CD8-positive, alpha-beta T cell (primary cell): ENCODE measurements at regions of chrX and their contacts with region 1.

Region 1: GRCh38 chrX:107205770-107206696 is at the starts of genes DNAAF6 and NUP62CL:
- DNase-seq: peak; percentile 28 to 82 (median 63)
- ATAC-seq: peak; percentile 85
- H3K4me3 ChIP-seq: peak within 1 kb of the TSS; percentile 63 to 71
- H3K4me3 Mint-ChIP-seq: peak within 1 kb of the TSS; percentile 89
- H3K27ac ChIP-seq: peak within 1 kb of the TSS in 1 of 2 experiments; percentile 29
- H3K27ac Mint-ChIP-seq: no peak within 1 kb of the TSS
- H3K4me1 ChIP-seq: no peaks in the 10 kb centered on the region
- H3K4me1 Mint-ChIP-seq: peaks cover 6% of the 10 kb centered on the region
- H3K27me3 ChIP-seq: no peaks in the 10 kb centered on the region
- H3K27me3 Mint-ChIP-seq: peaks cover 4% of the 10 kb centered on the region
- CTCF ChIP-seq: no peak
- total RNA-seq, gene DNAAF6: not detected
- total RNA-seq, gene NUP62CL: 0.65 to 0.75 TPM

Region 2: DNA sequence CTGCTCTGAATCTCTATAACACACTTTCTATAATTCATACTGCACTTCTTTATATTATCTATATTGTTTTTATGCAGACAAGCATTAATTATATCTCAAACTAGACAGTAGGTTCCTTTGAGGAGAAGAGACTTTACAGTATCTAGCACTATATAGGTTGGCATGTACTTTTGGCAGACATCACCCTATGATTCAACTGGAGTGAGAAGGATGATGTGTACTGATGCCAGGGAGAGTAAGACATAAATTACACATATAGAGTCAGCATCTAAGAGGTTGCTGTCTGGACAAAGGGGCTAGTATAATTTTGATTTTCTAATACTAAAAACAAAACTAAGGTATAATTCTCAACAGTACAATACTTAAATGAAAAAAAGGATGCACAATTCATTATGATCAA is 82.3 kb before region 1 on chrX:
- CTCF ChIA-PET with region 1: no interaction called
- POLR2A ChIA-PET with region 1: no interaction called
- intact Hi-C with region 1: loop called (anchors 5 to 10 kb)
- DNase-seq: no peak
- ATAC-seq: no peak
- H3K4me3 ChIP-seq: no peak overlapping the region
- H3K4me3 Mint-ChIP-seq: no peak overlapping the region
- H3K27ac ChIP-seq: no peak overlapping the region
- H3K27ac Mint-ChIP-seq: no peak overlapping the region
- H3K4me1 ChIP-seq: no peaks in the 10 kb centered on the region
- H3K4me1 Mint-ChIP-seq: peaks cover 7% of the 10 kb centered on the region
- H3K27me3 ChIP-seq: no peaks in the 10 kb centered on the region
- H3K27me3 Mint-ChIP-seq: no peaks in the 10 kb centered on the region
- CTCF ChIP-seq: no peak

Region 3: GRCh38 chrX:107710617-107711391 is 504.8 kb after region 1 on chrX:
- CTCF ChIA-PET with region 1: no interaction called
- POLR2A ChIA-PET with region 1: no interaction called
- intact Hi-C with region 1: no loop called
- DNase-seq: peak in 8 of 9 experiments; percentile 21 to 93 (median 66)
- ATAC-seq: peak; percentile 50
- H3K4me3 ChIP-seq: no peak overlapping the region
- H3K4me3 Mint-ChIP-seq: peak overlapping the region; percentile 71
- H3K27ac ChIP-seq: peak overlapping the region; percentile 100
- H3K27ac Mint-ChIP-seq: peak overlapping the region; percentile 99
- H3K4me1 ChIP-seq: peaks cover 48% of the 10 kb centered on the region
- H3K4me1 Mint-ChIP-seq: peaks cover 62% of the 10 kb centered on the region
- H3K27me3 ChIP-seq: no peaks in the 10 kb centered on the region
- H3K27me3 Mint-ChIP-seq: no peaks in the 10 kb centered on the region
- CTCF ChIP-seq: no peak